Dendritic cell treated with granulocyte-macrophage colony-stimulating factor and Interleukin-4, amounts not matched to agents 40 ng/mL and 50 ng/mL, for 4 days (primary cell): ENCODE measurements at regions of chr16 and their contacts with region 1.

Region 1: GRCh38 chr16:23556881-23557778 is at the starts of genes EARS2 and UBFD1:
- H3K4me3 Mint-ChIP-seq: peak within 1 kb of the TSS; percentile 92
- H3K27ac Mint-ChIP-seq: peak within 1 kb of the TSS; percentile 95
- H3K4me1 Mint-ChIP-seq: peaks cover 33% of the 10 kb centered on the region
- H3K27me3 Mint-ChIP-seq: no peaks in the 10 kb centered on the region

Region 2: GRCh38 chr16:23452572-23453337 is 104.4 kb before region 1 on chr16 and contains the start of gene COG7:
- intact Hi-C with region 1: loop called (anchors 10 kb)
- H3K4me3 Mint-ChIP-seq: peak within 1 kb of the TSS; percentile 96
- H3K27ac Mint-ChIP-seq: peak within 1 kb of the TSS; percentile 89
- H3K4me1 Mint-ChIP-seq: peaks cover 40% of the 10 kb centered on the region
- H3K27me3 Mint-ChIP-seq: no peaks in the 10 kb centered on the region

Region 3: GRCh38 chr16:23494188-23494587 is 62.9 kb before region 1 on chr16:
- intact Hi-C with region 1: no loop called
- H3K4me3 Mint-ChIP-seq: no peak overlapping the region
- H3K27ac Mint-ChIP-seq: no peak overlapping the region
- H3K4me1 Mint-ChIP-seq: peaks cover 28% of the 10 kb centered on the region
- H3K27me3 Mint-ChIP-seq: no peaks in the 10 kb centered on the region

Region 4: DNA sequence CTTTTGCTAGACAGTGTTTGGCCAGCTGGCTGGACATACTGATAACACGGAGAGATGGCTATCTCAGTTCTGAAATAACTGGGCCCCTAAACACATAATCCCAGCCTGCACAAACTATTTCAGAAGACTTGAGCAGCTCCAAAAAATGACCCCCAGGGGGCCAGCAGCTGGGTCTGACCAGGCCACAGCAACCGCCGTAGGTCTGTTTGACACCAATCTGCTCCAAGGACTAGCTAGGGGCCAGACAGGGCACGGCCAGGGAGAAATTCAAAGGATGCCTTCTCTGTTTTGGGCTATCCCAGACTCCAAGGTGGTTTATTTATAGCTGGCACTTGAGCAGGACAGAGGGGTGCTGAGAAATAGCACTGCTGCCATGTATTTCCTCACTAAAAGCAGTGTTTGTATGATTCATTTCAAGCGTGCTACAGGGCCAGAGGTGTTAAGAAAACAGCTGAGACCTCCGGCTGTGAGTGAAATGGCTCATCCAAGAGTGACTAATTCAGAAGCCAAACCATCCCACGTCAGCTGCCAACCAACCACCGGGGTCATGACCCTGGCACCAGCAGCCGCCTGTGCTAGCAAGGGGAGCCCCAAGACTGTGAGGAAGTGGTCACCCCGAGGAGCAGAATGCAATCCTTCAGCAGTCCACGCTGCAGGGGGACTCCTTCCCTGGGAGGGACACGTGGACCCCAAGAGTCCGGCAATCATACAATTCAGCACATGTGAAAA is 52.5 kb before region 1 on chr16:
- intact Hi-C with region 1: loop called (anchors 5 kb)
- H3K4me3 Mint-ChIP-seq: peak overlapping the region; percentile 10
- H3K27ac Mint-ChIP-seq: peak overlapping the region; percentile 33
- H3K4me1 Mint-ChIP-seq: peaks cover 91% of the 10 kb centered on the region
- H3K27me3 Mint-ChIP-seq: no peaks in the 10 kb centered on the region

Region 5: DNA sequence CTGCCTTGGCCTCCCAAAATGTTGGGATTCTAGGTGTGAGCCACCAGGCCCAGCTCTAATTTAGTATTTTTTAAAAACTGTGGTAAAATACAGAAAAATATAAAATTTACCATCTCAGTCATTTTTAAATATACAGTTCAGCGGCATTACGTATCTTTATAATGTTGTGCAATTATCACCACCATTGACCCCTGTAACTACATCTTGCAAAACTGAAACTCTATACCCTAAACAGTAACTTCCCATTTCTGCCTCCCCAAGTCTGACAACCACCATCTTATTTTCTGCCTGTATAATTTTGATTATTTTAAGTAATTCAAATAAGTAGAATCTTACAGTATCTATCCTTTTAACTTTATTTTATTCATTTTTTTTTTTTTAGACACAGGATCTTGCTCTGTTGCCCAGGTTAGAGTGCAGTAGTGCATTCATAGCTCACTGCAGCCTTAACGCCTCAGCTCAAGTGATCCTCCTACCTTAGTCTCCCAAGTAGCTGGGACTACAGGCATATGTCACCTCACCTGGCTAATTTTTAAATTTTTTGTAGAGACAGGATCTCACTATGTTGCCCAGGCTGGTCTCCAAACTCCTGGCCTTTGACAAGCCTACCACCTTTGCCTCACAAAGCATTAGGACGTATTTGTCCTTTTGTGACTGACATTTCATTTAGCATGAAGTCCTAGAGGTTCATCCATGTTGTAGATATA is 35.9 kb before region 1 on chr16:
- intact Hi-C with region 1: loop called (anchors 5 kb)
- H3K4me3 Mint-ChIP-seq: peak overlapping the region; percentile 20
- H3K27ac Mint-ChIP-seq: peak overlapping the region; percentile 95
- H3K4me1 Mint-ChIP-seq: peaks cover 76% of the 10 kb centered on the region
- H3K27me3 Mint-ChIP-seq: no peaks in the 10 kb centered on the region

Region 6: GRCh38 chr16:23570992-23571632 is 14.0 kb after region 1 on chr16:
- intact Hi-C with region 1: no loop called
- H3K4me3 Mint-ChIP-seq: no peak overlapping the region
- H3K27ac Mint-ChIP-seq: peak overlapping the region; percentile 56
- H3K4me1 Mint-ChIP-seq: peaks cover 38% of the 10 kb centered on the region
- H3K27me3 Mint-ChIP-seq: no peaks in the 10 kb centered on the region

Region 7: DNA sequence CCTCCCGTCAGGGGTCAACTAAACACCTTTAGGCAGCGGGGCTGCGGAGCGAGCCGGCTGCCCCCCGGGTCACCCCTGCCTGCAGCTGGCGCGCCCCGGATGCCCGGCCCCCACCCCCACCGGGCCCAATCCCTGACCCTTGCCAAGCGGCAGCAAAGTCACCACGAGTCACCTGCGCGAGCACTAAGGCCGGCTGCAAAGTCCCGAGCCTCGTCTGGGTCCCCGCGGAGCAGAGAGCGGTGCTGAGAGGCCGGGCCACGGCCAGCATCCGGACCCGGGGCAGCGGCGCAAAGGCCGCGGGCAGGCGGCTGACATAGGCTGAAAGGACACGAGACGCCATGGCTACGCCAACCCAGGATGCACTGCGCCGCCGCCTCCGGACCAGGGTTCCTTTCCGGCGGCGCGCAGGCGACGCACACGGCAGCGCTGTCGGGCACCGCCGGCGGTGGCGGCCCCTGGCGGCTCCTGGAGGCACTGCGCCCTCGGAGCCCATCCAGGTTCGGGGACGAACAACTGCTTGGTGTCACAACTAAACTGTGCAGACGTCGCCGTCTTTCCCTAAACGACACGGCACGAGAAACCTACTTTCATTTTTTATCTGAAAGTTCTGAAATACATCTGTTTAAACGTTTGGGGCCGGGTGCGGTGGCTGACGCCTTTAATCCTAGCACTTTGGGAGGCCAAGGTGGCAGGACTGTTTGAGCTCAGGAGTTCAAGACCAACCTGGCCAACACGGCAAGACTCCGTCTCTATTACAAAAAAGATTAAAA is 39.0 kb after region 1 on chr16 and contains the start of gene NDUFAB1:
- intact Hi-C with region 1: loop called (anchors 1 kb)
- H3K4me3 Mint-ChIP-seq: peak within 1 kb of the TSS; percentile 81
- H3K27ac Mint-ChIP-seq: peak within 1 kb of the TSS; percentile 80
- H3K4me1 Mint-ChIP-seq: peaks cover 31% of the 10 kb centered on the region
- H3K27me3 Mint-ChIP-seq: no peaks in the 10 kb centered on the region

Region 8: DNA sequence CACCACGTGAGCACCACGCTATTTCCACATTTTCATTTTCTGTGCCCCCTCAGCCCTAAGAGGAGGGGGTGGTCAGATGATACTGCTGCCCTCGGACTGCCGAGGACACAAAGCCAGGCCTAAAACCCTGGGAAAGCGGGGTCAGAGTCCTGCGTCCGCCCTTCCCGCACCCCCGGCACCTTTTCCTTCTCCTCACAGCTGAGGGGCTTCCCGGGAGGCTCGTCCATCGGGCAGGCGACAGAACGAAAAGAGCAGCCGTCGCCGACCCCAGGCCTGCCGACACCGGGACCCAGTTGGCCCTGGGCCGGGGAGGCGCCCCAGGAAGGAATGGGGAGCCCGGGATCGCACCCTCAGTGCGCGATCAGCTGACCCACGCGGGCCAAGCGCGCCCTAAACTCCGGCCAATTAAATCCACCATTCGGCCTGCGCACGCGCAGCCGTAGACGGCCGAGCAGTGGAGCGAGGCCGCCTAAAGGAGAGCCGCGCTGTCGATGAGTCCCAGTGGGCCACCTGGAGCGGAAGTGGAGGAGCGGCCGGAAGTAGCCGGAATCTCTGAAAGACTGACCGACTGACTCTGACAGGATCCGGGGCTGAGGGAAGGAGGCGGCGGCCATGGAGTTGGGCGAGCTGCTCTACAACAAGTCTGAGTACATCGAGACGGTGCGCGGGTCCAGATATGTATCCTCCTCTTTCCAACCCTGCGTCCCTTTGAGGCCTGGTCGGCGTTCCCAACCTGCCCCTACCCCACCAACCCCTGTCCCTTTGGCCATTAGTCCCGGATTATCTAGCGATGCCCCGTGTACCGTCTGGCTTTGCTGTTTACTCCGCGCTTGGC is 84.0 kb after region 1 on chr16 and contains the starts of genes DCTN5 and PALB2:
- intact Hi-C with region 1: loop called (anchors 1 kb)
- H3K4me3 Mint-ChIP-seq: peak within 1 kb of the TSS; percentile 92
- H3K27ac Mint-ChIP-seq: peak within 1 kb of the TSS; percentile 96
- H3K4me1 Mint-ChIP-seq: peaks cover 24% of the 10 kb centered on the region
- H3K27me3 Mint-ChIP-seq: no peaks in the 10 kb centered on the region